ENCODE measurements at regions of chr2 and their contacts with region 1.

Region 1: DNA sequence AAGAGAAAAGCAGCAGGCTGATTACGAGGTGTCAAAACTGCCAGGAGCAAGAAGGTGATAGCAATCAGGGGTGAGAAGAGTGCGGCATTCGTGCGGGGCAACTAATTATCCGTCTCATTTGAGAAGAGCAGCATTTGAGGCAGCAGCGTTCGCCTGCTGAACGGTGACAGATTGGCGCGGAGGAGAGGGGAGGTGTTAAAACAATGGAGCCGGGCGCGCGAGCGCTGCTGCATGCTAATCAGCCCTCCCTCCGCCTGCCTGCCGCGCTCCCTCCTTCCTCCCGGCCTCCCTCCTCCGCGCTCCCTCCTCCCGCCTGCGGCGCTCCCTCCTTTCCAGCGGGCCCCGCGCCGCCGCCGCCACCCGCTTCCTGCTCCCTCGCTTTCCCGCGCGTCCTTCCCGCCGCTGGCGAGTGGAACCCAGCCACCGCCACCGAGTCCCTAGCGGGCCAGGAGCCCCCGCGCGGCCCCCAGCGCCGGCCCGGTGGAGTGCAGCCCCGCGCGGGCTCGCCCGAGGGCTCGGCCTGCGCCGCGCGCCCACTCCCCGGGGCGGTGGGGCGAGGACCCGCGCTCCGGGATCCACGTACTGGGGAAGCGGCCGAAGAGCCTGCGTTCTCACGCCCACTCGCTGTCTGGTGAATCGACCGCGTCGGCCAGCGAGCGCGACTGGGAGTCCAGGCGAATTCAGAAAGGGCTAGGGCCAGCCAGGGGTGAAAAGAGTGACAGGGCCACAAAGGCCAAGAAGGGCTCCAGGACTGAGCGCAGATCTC is 69.5 kb upstream of the PSMD14 start:
- DNase-seq: peak; percentile 39
- H3K4me3 Mint-ChIP-seq: peak overlapping the region; percentile 84
- H3K27ac Mint-ChIP-seq: peak overlapping the region; percentile 66
- H3K4me1 Mint-ChIP-seq: peaks cover 37% of the 10 kb centered on the region
- H3K27me3 Mint-ChIP-seq: no peaks in the 10 kb centered on the region

Region 2: DNA sequence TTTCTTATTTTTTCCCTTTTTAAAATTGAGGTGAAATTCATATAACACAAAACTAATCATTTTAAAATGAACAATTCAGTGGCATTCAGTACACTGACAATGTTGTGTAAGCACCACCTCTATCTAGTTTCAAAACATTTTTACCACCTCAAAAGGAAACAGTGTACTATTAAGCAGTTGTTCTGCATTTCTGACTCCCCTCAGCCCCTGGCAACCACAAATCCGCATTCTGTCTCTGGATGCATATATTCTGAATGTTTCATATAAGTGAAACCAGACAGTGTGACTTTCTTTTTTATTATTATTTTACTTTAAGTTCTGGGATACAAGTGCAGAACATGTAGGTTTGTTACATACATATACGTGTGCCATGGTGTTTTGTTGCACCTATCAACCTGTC is 97.7 kb before region 1 on chr2:
- intact Hi-C with region 1: no loop called
- DNase-seq: no peak
- H3K4me3 Mint-ChIP-seq: peak overlapping the region; percentile 50
- H3K27ac Mint-ChIP-seq: no peak overlapping the region
- H3K4me1 Mint-ChIP-seq: peaks cover 73% of the 10 kb centered on the region
- H3K27me3 Mint-ChIP-seq: no peaks in the 10 kb centered on the region

Region 3: DNA sequence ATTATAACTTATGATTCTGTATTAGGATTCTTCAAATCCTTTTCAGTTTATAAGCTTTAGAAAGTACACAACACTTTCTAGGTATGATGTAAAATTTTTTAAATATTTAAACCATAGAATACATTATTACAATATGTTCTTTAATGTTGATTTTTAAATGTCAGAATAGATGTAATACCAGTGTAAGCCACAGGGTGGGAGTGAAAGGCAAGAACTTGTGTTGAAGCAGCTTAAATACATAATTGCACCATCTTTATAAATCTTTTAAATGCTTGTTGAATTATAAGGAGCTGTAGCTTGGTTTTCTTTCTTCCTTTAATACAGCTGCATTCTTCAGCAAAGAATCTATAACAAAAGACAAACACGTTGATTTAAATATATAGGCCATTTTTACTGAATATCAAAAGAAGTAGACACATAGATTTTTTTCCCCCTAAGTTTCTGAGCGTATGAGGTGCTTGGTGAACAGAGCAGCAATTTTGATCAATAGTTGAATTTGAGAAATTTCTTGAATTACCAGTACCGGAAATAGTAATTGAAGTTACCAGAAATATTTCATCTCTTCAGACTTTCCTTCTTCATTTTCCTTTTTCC is 15.5 kb before region 1 on chr2:
- intact Hi-C with region 1: loop called (anchors 2 kb)
- DNase-seq: no peak
- H3K4me3 Mint-ChIP-seq: no peak overlapping the region
- H3K27ac Mint-ChIP-seq: no peak overlapping the region
- H3K4me1 Mint-ChIP-seq: peaks cover 1% of the 10 kb centered on the region
- H3K27me3 Mint-ChIP-seq: no peaks in the 10 kb centered on the region

Region 4: DNA sequence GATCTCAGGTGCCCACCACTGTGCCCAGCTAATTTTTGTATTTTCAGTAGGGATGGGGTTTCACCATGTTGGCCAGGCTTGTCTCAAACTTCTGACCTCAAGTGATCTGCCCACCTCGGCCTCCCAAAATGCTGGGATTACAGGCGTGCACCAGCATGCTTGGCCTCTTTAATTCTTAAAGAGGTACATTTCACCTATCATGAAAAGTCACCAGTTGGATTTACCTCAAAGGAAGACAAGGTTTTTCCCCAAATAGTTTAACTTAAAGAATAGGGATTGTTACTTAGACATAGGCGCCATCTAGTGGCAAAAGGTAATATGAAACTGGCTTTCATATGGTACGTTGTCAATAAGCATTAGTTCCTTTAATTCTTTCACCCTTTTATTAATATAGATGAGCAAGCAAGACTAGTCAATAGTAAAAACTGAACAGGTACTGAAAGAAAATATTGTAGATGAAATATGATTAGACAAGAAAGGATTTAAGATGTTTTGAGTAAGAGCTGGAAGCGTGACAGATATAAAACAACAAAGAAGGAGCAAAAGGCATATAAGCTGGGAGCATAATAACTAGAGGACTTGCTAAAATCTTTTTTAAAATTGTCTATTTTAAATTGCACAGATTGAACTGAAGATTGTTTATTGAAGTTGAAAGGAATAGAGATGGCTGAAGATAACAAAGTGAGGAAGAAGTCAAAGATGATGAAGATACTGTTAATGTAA is 34.5 kb after region 1 on chr2:
- intact Hi-C with region 1: loop called (anchors 1 kb)
- DNase-seq: no peak
- H3K4me3 Mint-ChIP-seq: no peak overlapping the region
- H3K27ac Mint-ChIP-seq: no peak overlapping the region
- H3K4me1 Mint-ChIP-seq: peaks cover 8% of the 10 kb centered on the region
- H3K27me3 Mint-ChIP-seq: peaks cover 20% of the 10 kb centered on the region

Region 5: DNA sequence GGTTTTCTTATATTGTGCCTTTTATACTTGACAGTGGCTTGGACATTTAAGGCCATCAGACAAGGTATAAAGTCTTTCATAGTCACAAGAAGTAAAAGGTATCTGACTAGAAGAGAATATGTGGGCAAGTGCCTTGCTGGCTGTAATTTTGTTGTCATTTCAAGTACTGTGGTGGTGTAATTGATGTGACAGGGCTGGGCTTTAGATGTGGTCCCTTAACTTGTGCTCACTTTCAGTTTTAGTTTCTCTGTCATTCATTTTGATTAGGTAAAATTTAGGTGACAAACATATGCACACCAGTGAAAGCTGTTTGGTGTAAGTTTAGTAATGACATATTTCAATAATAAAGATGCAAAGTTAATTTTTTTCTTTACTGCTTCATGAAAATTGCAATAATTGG is 146.1 kb after region 1 on chr2:
- intact Hi-C with region 1: loop called (anchors 10 kb)
- DNase-seq: peak; percentile 24
- H3K4me3 Mint-ChIP-seq: peak overlapping the region; percentile 45
- H3K27ac Mint-ChIP-seq: no peak overlapping the region
- H3K4me1 Mint-ChIP-seq: peaks cover 31% of the 10 kb centered on the region
- H3K27me3 Mint-ChIP-seq: no peaks in the 10 kb centered on the region

Region 6: GRCh38 chr2:161414042-161415033 is 175.6 kb after region 1 on chr2:
- intact Hi-C with region 1: loop called (anchors 5 kb)
- DNase-seq: peak; percentile 10
- H3K4me3 Mint-ChIP-seq: peak overlapping the region; percentile 31
- H3K27ac Mint-ChIP-seq: no peak overlapping the region
- H3K4me1 Mint-ChIP-seq: peaks cover 46% of the 10 kb centered on the region
- H3K27me3 Mint-ChIP-seq: peaks cover 52% of the 10 kb centered on the region

Region 7: DNA sequence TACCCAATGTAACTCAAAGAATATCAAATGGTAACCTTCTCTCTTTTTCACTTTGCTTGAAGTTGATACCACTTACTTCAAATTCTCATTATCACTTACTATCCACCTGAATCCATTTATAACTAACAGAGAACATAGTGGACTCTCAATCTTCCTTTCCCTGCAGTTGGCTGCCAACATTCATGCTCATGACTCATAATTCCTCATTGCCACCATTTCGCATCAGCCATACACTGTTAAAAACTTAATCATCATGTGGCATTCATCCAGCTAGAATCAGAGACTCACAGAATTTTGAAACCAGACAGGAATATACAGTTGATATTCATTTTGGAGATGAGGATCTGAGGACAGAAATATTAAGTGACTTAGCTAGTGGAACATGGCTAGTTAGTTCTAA is 442.3 kb after region 1 on chr2:
- intact Hi-C with region 1: no loop called
- DNase-seq: no peak
- H3K4me3 Mint-ChIP-seq: no peak overlapping the region
- H3K27ac Mint-ChIP-seq: no peak overlapping the region
- H3K4me1 Mint-ChIP-seq: no peaks in the 10 kb centered on the region
- H3K27me3 Mint-ChIP-seq: peaks cover 9% of the 10 kb centered on the region

Measured in activated T-helper 2 cell treated with anti-CD3 and anti-CD28 coated beads, Interferon-gamma antibody, Interleukin-2, Interleukin-4, amounts not matched to agents 10 μg/mL and 5 μg/mL and 100 μg/mL, durations not matched to agents 14 hours and 24 hours and 36 hours (primary cell).